Posterior vena cava (tissue), 2 donors: ENCODE measurements at regions of chr12 and their contacts with region 1.

Region 1: GRCh38 chr12:41992022-41992421 is 152.7 kb downstream of the GXYLT1 start:
- DNase-seq: no peak

Region 2: GRCh38 chr12:42056130-42056529 is 64.1 kb after region 1 on chr12:
- intact Hi-C with region 1: loop called in 1 of 2 experiments (anchors 2 kb)
- DNase-seq: no peak

Region 3: DNA sequence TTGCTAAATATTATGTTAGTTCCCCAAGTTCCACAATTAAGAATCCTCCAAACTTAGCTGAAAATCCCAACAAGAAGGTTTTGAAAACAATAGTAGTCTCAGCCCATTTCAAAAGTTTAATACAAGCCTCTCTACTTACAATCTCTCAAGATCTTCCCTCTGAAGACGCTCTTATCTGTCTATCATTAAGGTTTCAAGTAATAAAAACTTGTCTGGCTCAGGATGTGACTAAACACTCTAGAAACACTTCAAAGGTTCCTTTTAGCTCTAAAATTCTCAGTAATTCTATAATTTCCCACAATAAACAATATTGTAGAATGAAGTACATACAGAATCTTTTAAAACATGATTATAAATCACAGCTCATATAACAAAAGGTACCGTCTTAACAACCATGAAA is 229.7 kb after region 1 on chr12:
- intact Hi-C with region 1: loop called in 1 of 2 experiments (anchors 5 kb)
- DNase-seq: no peak